Esophagus muscularis mucosa (tissue), 4 donors: ENCODE measurements at regions of chr6 and their contacts with region 1.

Region 1: GRCh38 chr6:20056350-20056992 is 155.8 kb downstream of the MBOAT1 start:
- DNase-seq: no peak
- H3K4me3 ChIP-seq: no peak overlapping the region
- H3K27ac ChIP-seq: no peak overlapping the region
- H3K4me1 ChIP-seq: peaks cover 0 to 7% (median 7%) of the 10 kb centered on the region in 4 donors
- H3K27me3 ChIP-seq: no peaks in the 10 kb centered on the region
- CTCF ChIP-seq: peak; percentile 60
- EP300 ChIP-seq: no peak
- POLR2A ChIP-seq: no peak

Region 2: DNA sequence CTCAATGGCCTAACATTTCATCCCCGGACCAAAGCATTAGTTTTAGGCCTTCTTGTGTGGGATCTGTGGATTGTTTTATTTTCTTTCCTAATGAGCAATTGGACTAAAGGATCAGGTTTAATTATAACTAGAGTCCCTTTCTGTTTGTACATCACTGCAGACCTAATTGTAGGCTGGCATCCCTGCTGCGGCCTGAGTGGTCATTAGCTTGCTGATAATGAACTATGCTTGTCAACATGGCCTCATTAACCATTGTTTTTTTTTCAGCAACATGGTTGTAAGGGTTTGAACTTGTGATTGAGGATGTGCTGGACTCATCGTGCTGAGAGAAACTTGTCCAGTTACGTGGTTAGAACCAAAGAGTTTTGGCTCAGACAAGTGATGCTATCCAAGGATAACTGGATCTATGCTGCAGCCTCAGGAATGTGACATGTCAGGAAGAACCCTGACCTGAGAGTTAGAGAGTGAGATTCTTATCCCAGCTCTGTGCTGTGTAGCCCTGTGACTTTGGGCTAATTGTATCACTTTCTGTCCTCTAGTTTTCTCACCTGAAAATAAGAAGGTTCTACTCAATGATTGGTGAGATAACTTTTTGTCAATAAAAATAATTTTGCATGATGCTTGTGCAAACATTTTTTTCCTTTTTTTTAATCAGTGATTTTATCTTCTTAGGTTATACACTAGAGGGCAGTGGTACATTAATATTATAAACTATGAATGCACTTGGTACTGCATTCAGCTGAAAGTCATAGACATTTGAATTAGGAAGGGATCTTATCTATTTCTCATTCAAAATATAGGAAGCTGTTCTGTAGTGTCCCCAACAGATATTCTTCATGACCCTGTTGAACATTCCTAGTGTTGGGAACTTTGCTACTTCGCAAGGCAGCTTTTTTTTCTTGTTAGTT is 1528.4 kb before region 1 on chr6:
- intact Hi-C with region 1: loop called (anchors 10 kb)
- DNase-seq: peak; percentile 31
- H3K4me3 ChIP-seq: no peak overlapping the region
- H3K27ac ChIP-seq: no peak overlapping the region
- H3K4me1 ChIP-seq: no peaks in the 10 kb centered on the region
- H3K27me3 ChIP-seq: no peaks in the 10 kb centered on the region
- CTCF ChIP-seq: peak; percentile 31 to 38 (median 32)
- EP300 ChIP-seq: no peak
- POLR2A ChIP-seq: no peak

Region 3: GRCh38 chr6:18595774-18596530 is 1460.5 kb before region 1 on chr6:
- intact Hi-C with region 1: loop called (anchors 2 kb)
- DNase-seq: no peak
- H3K4me3 ChIP-seq: peak overlapping the region in 2 of 4 donors; percentile 9 to 15
- H3K27ac ChIP-seq: peak overlapping the region; percentile 21 to 54 (median 49)
- H3K4me1 ChIP-seq: peaks cover 0 to 21% (median 19%) of the 10 kb centered on the region in 4 donors
- H3K27me3 ChIP-seq: no peaks in the 10 kb centered on the region
- CTCF ChIP-seq: peak; percentile 85 to 93 (median 91)
- EP300 ChIP-seq: no peak
- POLR2A ChIP-seq: no peak

Region 4: GRCh38 chr6:18742406-18742805 is 1314.1 kb before region 1 on chr6:
- intact Hi-C with region 1: loop called (anchors 10 kb)
- DNase-seq: no peak
- H3K4me3 ChIP-seq: no peak overlapping the region
- H3K27ac ChIP-seq: no peak overlapping the region
- H3K4me1 ChIP-seq: no peaks in the 10 kb centered on the region
- H3K27me3 ChIP-seq: no peaks in the 10 kb centered on the region
- CTCF ChIP-seq: no peak
- EP300 ChIP-seq: no peak
- POLR2A ChIP-seq: no peak

Region 5: DNA sequence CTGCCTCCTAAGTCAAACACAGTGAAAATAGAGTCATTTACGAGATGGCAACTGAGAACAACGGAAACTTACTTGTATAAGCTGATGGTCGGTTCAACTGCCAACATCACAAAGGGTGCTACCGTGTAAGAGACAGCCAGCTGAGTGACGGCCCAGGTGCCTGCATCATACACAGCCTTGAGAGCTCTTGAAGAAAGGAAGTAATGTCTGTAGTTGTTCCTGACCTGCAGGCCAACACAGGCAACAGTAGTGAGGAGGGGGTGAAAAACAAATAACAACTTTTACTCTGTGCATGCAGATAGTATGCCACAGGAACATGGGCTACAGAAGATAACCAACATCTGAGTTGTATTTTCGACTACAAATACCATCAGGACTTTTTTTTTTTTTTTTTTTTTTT is 53.1 kb after region 1 on chr6:
- intact Hi-C with region 1: no loop called
- DNase-seq: no peak
- H3K4me3 ChIP-seq: no peak overlapping the region
- H3K27ac ChIP-seq: no peak overlapping the region
- H3K4me1 ChIP-seq: peaks cover 0 to 11% (median 3%) of the 10 kb centered on the region in 4 donors
- H3K27me3 ChIP-seq: no peaks in the 10 kb centered on the region
- CTCF ChIP-seq: no peak
- EP300 ChIP-seq: no peak
- POLR2A ChIP-seq: no peak

Region 6: DNA sequence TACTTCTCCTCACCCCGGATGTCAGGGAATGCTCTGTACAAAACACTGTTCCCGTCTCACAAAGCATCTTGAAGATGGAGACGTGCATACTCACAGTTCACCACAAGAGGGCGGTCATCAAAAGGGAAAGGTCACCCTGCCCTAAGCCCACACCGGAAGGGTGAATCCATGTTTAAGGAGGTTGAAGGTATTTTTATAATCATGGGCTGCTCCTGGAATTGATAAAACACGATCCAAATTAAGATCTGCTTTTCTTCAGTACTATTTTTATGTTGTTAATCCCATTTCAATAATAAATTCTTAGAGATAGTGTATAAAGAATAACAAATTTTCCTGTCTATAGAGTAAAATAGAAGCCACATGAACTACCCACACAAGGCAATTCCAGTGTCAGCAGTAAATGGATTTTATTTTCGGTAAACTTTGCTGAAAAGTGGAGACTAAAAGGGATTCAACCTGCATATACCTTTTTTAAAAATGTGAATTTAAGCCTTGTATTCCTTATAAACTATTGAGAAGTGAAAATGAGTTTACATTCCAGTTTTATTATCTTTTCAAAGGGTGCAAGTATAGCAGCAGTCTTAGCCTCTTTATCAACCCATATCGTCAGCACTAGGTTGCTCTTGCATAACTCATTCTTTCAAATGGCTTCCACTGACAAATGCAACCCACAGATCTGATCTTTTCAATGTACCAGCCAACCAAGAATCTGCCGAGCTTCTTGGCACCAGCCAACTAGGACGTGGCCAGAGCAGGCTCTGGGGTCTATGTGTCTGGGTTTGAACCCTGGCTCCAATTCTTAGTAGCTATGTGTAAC is 235.5 kb after region 1 on chr6:
- intact Hi-C with region 1: no loop called
- DNase-seq: peak; percentile 96
- H3K4me3 ChIP-seq: no peak overlapping the region
- H3K27ac ChIP-seq: no peak overlapping the region
- H3K4me1 ChIP-seq: peaks cover 0 to 4% (median 0%) of the 10 kb centered on the region in 4 donors
- H3K27me3 ChIP-seq: no peaks in the 10 kb centered on the region
- CTCF ChIP-seq: peak; percentile 88 to 95 (median 88)
- EP300 ChIP-seq: no peak
- POLR2A ChIP-seq: no peak